ENCODE measurements at regions of chr2 and their contacts with region 1.

Region 1: DNA sequence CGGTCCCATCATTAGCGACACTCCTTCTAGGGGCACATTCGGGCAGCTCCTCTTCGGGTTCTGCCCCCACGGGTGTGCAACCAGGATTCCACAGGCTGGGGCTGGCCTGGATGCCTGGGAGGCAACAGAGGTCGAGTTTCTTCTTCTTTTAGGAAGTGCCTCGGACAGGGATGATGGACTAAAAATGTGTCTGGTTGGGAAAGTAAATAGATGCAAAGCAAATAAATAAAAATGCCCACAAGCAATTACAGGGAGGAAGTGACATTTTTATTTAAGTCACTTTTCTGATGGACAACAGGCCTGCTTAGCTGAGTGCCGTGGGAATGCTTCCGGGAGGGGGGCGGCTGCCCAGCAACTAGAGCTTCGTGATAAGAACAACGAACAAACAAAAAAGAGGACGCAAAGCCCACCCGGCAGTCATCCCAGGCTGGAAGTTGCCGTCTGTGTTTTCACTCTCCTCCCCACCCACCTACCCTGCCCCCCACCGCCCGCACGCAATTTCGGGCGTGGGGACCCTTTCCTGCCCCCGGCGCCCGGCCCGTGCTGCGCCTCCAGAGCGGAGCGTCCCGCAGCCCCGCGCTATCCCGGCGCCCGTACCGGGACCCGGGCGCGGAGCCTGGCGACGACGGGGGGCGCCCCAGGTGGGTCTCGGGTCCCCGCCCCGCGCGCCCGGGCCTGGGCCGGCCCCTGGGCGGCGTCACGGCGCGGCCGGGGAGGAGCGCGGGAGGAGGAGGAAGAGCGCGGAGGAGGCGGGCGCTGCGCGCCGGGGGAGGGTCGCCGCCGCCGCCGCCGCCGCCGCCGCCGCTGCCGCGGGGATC is 412 bp upstream of the NCK2 start:
- DNase-seq: peak; percentile 28
- ATAC-seq: peak; percentile 96
- H3K4me3 ChIP-seq: peak overlapping the region; percentile 87
- H3K27ac ChIP-seq: peak overlapping the region; percentile 10; the same call in 1 of the 2 replicates
- H3K4me1 ChIP-seq: peaks cover 6% of the 10 kb centered on the region
- H3K27me3 ChIP-seq: peaks cover 4% of the 10 kb centered on the region
- CTCF ChIP-seq: no peak
- POLR2A ChIP-seq: no peak
- RAD21 ChIP-seq: no peak

Region 2: GRCh38 chr2:105576440-105577252 is 167.7 kb before region 1 on chr2:
- CTCF ChIA-PET with region 1: no interaction called
- POLR2A ChIA-PET with region 1: no interaction called
- dilution Hi-C with region 1: no loop called
- in situ Hi-C with region 1: no loop called
- intact Hi-C with region 1: loop called (anchors 10 kb)
- DNase-seq: peak; percentile 42
- ATAC-seq: peak; percentile 77
- H3K4me3 ChIP-seq: no peak overlapping the region
- H3K27ac ChIP-seq: no peak overlapping the region
- H3K4me1 ChIP-seq: peaks cover 4% of the 10 kb centered on the region; the same call in 1 of the 2 replicates
- H3K27me3 ChIP-seq: peaks cover 22% of the 10 kb centered on the region
- CTCF ChIP-seq: peak; percentile 49
- POLR2A ChIP-seq: no peak
- RAD21 ChIP-seq: peak; percentile 54

Region 3: DNA sequence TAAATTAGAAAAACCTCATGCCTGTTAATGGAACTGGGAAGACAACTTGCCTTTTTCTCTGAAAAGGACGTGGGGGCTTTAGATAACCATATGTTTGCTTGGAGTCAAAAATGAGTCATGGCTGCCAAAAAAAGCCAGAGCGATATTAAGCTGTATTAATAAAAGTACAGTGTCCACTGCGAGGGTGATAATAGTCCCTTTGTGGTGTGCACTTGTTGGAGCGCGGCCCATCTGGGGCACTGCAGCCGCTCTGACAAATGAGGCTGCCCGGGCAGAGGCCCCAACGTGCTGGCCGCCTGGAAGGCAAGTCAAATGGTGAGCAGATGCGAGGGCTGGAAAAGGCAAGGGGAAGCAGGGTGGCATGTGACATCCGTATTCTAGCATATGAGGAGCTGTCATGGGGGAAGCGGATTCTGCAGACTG is 102.9 kb before region 1 on chr2:
- CTCF ChIA-PET with region 1: no interaction called
- POLR2A ChIA-PET with region 1: no interaction called
- dilution Hi-C with region 1: no loop called
- in situ Hi-C with region 1: no loop called
- intact Hi-C with region 1: no loop called
- DNase-seq: no peak
- ATAC-seq: no peak
- H3K4me3 ChIP-seq: no peak overlapping the region
- H3K27ac ChIP-seq: no peak overlapping the region
- H3K4me1 ChIP-seq: no peaks in the 10 kb centered on the region
- H3K27me3 ChIP-seq: peaks cover 19% of the 10 kb centered on the region
- CTCF ChIP-seq: no peak
- POLR2A ChIP-seq: no peak
- RAD21 ChIP-seq: no peak

Region 4: DNA sequence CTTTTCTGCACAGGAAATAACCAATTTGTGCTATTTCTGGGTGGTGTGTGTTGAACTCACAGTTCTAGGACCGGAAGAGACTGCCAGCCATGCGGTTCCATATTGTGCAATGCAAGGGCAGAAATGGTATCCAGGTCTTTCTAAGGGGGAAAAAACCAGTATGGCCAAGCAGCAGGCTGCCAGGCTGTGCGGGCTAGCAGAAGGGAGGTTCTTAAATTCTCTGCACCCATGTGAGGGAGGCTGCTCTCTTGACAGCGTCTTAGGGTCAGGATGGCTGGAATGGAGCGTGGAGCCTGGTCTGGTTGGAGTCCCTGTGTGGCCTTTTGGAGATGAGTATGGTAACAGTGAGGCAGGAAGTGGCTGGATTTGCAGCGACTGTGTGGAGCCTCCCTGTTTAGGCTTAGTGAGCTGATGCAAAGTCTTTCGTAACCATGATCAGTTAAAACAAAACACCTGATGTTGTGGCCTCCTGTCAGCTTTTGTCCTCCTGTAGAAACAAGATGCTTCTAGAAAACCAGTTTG is 53.1 kb after region 1 on chr2:
- CTCF ChIA-PET with region 1: no interaction called
- POLR2A ChIA-PET with region 1: no interaction called
- dilution Hi-C with region 1: no loop called
- in situ Hi-C with region 1: no loop called
- intact Hi-C with region 1: no loop called
- DNase-seq: peak; percentile 48
- ATAC-seq: peak; percentile 54
- H3K4me3 ChIP-seq: no peak overlapping the region
- H3K27ac ChIP-seq: peak overlapping the region; percentile 41
- H3K4me1 ChIP-seq: peaks cover 16% of the 10 kb centered on the region
- H3K27me3 ChIP-seq: no peaks in the 10 kb centered on the region
- CTCF ChIP-seq: no peak
- POLR2A ChIP-seq: no peak
- RAD21 ChIP-seq: no peak

Region 5: DNA sequence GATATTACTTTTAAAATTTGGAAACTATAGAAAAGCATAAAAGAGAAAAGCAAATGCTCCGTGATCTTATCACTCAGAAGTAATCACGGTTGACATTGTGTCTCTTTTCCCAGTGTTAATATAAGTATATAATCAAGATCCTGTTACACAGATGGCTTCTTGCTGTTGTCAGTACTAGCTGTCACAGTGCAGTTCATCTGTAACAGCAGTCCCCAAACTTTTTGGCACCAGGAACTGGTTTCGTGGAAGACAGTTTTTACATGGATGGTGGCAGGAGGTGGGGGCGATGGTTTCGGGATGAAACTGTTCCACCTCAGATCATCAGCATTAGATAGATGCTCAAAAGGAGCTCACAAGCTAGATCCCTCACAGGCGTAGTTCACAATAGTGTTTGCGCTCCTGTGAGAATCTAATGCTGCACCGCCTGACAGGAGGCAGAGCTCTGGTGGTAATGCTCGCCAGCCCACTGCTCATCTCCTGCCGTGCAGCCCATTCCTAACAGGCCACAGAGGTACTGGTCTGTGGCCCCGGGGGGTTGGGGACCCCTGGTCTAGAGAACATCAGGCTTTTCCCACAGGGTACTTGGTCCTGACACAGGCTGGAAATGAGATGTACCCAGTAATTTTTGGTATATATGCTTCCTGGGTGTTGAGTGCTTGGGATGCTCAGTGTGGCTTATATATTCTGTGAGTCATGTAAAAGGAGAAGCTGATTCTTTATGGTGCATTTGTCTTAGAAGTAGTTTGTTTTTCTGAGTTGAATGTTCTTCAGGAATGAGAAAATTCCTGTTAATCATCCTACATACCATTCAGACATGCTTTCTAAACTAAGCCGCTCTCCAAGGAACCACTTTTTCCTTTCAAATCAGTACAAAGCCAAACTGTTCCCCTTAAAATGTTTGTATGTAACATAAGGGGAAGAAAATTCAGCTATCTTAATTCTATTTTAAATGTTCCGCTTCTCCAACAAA is 122.2 kb after region 1 on chr2:
- CTCF ChIA-PET with region 1: no interaction called
- POLR2A ChIA-PET with region 1: no interaction called
- dilution Hi-C with region 1: no loop called
- in situ Hi-C with region 1: no loop called
- intact Hi-C with region 1: loop called (anchors 5 kb)
- DNase-seq: peak; percentile 80
- ATAC-seq: peak; percentile 89
- H3K4me3 ChIP-seq: no peak overlapping the region
- H3K27ac ChIP-seq: peak overlapping the region; percentile 76
- H3K4me1 ChIP-seq: peaks cover 19% of the 10 kb centered on the region
- H3K27me3 ChIP-seq: no peaks in the 10 kb centered on the region
- CTCF ChIP-seq: no peak
- POLR2A ChIP-seq: no peak
- RAD21 ChIP-seq: no peak

Region 6: GRCh38 chr2:105977212-105977611 is 232.9 kb after region 1 on chr2:
- CTCF ChIA-PET with region 1: no interaction called
- POLR2A ChIA-PET with region 1: no interaction called
- dilution Hi-C with region 1: no loop called
- in situ Hi-C with region 1: no loop called
- intact Hi-C with region 1: loop called (anchors 10 kb)
- DNase-seq: peak; percentile 86
- ATAC-seq: peak; percentile 98
- H3K4me3 ChIP-seq: no peak overlapping the region
- H3K27ac ChIP-seq: no peak overlapping the region
- H3K4me1 ChIP-seq: no peaks in the 10 kb centered on the region; the same call in 1 of the 2 replicates
- H3K27me3 ChIP-seq: peaks cover 12% of the 10 kb centered on the region
- CTCF ChIP-seq: no peak
- POLR2A ChIP-seq: no peak
- RAD21 ChIP-seq: no peak

Region 7: DNA sequence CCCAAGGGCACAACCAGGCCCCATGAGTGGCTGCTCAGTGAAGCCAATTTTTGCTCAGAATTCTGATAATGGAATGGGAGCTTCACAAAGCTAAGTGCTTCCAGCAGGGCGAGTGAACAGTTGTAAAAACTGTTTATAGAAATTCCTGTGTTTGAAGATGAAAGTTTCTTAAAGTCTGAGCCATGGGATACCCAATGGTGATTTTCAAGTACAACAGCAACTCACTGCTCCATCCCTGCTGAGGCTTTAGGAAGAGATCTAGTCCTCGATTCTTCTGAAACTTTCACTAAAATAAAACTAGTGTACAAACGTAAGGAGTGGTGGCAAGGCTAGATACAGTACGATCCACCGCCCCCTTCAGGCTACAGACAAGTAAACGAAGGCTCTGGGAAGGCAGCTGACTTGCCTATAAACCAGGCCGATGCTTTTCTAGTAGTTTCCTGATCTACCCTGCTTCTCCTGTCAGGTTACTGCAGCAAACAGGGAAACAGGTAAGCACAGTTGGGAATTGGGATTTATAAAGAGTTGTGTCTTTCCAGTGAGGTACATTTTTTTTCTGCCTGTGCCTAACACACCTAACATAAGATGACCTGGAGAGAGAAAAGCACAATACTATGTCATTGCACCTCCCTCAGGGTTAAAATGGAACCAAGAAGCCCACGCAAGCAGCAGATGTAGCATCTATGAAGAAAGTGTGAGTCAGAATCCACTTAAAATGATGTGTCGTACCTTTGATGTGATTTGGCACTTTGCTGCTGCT is 341.1 kb after region 1 on chr2:
- CTCF ChIA-PET with region 1: no interaction called
- POLR2A ChIA-PET with region 1: no interaction called
- dilution Hi-C with region 1: no loop called
- in situ Hi-C with region 1: no loop called
- intact Hi-C with region 1: loop called (anchors 10 kb)
- DNase-seq: peak; percentile 39
- ATAC-seq: peak; percentile 92
- H3K4me3 ChIP-seq: no peak overlapping the region
- H3K27ac ChIP-seq: no peak overlapping the region
- H3K4me1 ChIP-seq: no peaks in the 10 kb centered on the region
- H3K27me3 ChIP-seq: peaks cover 10% of the 10 kb centered on the region
- CTCF ChIP-seq: peak; percentile 50
- POLR2A ChIP-seq: no peak
- RAD21 ChIP-seq: peak; percentile 53